ENCODE measurements at regions of chr3 and their contacts with region 1.

Region 1: DNA sequence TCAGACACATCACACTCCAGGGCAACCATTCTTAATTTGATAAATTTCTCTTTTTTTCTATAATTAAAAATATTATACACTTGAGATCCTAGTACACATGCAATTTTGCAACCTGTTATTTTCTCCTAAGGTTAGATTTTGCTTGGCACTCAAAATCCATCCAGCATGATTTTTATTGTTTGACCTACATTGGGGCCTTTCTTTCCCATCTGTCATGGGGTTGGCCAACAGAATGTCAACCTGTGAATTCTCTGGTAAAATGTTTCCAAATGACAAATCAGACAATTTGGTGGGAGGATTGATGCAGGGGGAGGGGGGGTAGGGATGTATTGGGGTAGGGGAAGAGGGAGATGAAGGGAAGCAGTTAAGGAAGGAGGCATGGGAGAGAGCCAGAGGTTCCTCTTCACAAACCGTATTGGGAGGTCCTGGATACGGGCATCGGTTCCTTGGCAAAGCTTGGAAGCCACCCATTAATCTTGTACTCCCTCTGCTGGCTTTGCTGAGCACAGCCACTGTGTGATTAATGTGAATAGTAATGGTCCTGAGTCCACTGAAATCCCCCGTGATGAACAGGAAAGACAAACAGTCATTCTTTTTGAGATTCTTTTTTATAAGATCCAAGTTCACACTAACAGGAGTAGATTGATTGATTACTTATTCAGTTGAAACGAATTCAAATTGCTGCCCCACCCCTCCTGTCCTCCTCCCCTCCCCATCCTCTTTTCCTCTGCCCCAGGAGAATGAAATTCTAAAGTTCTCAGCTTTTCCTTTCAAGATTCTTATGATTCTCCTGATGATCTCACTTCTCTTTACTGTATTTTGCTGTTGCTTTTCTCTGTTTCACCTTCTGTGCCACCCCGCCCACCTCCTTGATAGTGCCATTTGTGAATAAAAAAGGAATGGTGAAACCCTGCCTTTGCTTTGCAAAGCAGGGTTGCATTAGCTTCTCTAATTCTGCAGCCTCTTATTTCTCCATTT is 82.2 kb upstream of the SLC25A26 start:
- DNase-seq: peak in 4 of 5 donors; percentile 73 to 87 (median 76)
- H3K4me3 ChIP-seq: no peak overlapping the region
- H3K27ac ChIP-seq: no peak overlapping the region
- H3K4me1 ChIP-seq: peaks cover 0 to 4% (median 1%) of the 10 kb centered on the region in 3 donors
- H3K27me3 ChIP-seq: no peaks in the 10 kb centered on the region
- CTCF ChIP-seq: peak; percentile 85

Region 2: DNA sequence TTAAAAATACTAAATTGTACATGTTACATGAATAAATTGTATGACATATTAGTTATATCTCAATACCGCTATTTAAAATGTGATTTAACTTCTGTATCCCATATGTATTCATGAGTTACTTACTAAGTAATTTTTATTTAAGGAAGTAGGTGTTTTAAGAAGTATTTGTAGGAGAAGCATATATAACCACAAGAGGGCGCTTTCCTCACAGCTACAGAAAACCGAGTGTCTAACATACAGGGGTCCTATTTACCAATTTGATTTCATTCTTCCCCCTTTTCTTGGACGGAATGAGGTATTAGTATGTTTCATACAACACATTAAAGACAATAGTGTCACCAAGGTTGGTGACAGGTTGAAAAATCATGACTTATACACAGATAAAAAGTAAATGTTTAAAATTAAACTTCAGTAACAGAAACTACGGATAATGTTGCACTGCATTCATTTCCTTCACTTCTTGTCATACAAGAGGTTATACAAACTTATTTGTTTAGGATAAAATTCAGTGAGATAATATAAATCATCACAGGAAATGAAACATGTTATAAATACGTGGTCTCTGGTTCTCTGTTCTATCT is 353.5 kb before region 1 on chr3:
- intact Hi-C with region 1: loop called (anchors 10 kb)
- DNase-seq: peak in 2 of 5 donors; percentile 82 to 83
- H3K4me3 ChIP-seq: no peak overlapping the region
- H3K27ac ChIP-seq: no peak overlapping the region
- H3K4me1 ChIP-seq: peaks cover 0 to 15% (median 3%) of the 10 kb centered on the region in 3 donors
- H3K27me3 ChIP-seq: no peaks in the 10 kb centered on the region
- CTCF ChIP-seq: peak; percentile 64

Region 3: GRCh38 chr3:65953301-65953812 is 185.3 kb before region 1 on chr3:
- intact Hi-C with region 1: no loop called
- DNase-seq: peak; percentile 74 to 86 (median 86)
- H3K4me3 ChIP-seq: peak overlapping the region in 1 of 3 donors; percentile 54
- H3K27ac ChIP-seq: peak overlapping the region; percentile 81 to 89
- H3K4me1 ChIP-seq: peaks cover 6 to 48% (median 20%) of the 10 kb centered on the region in 3 donors
- H3K27me3 ChIP-seq: no peaks in the 10 kb centered on the region
- CTCF ChIP-seq: no peak